Pancreas (tissue), 10 donors: ENCODE measurements at regions of chr10 and their contacts with region 1.

Region 1: GRCh38 chr10:30247704-30248103 is 101.4 kb downstream of the MTPAP start:
- DNase-seq: no peak
- ATAC-seq: no peak
- H3K4me3 ChIP-seq: no peak overlapping the region
- H3K27ac ChIP-seq: no peak overlapping the region
- H3K4me1 ChIP-seq: no peaks in the 10 kb centered on the region
- H3K27me3 ChIP-seq: no peaks in the 10 kb centered on the region
- CTCF ChIP-seq: no peak

Region 2: GRCh38 chr10:30002104-30002950 is 245.4 kb before region 1 on chr10:
- intact Hi-C with region 1: loop called in 1 of 3 experiments (anchors 10 kb)
- DNase-seq: peak; percentile 57 to 93 (median 76)
- ATAC-seq: peak; percentile 82 to 93 (median 88)
- H3K4me3 ChIP-seq: no peak overlapping the region
- H3K27ac ChIP-seq: no peak overlapping the region
- H3K4me1 ChIP-seq: no peaks in the 10 kb centered on the region
- H3K27me3 ChIP-seq: peaks cover 0 to 2% (median 0%) of the 10 kb centered on the region in 4 donors
- CTCF ChIP-seq: peak; percentile 41 to 82 (median 63)